Activated CD4-positive, alpha-beta T cell treated with anti-CD3 and anti-CD28 coated beads for 36 hours (primary cell): ENCODE measurements at regions of chr2 and their contacts with region 1.

Region 1: GRCh38 chr2:9021563-9022211 is 18.2 kb upstream of the MBOAT2 start:
- DNase-seq: no peak
- ATAC-seq: peak; percentile 42
- H3K4me3 Mint-ChIP-seq: no peak overlapping the region
- H3K27ac Mint-ChIP-seq: no peak overlapping the region
- H3K4me1 Mint-ChIP-seq: no peaks in the 10 kb centered on the region
- H3K27me3 Mint-ChIP-seq: peaks cover 11% of the 10 kb centered on the region

Region 2: DNA sequence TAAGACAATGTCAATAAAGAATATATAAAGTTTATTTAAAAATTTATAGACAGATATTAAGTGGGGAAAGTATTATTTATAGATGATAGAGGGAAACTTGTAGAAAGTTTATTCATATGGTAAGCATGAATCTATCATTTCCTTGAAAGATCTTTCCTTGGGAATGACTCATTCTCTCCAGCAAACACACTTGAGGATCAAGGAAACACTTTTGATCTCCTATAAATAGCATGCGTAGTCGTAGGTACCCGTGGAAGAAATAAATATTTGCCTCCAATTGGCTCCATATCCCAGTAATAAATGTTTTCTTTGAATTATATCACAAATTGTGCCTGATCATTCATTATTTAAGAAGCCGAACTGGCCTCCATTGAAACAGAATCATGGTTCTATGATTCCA is 1621.1 kb before region 1 on chr2:
- CTCF ChIA-PET with region 1: no interaction called
- POLR2A ChIA-PET with region 1: no interaction called
- intact Hi-C with region 1: loop called in 1 of 2 experiments (anchors 5 kb)
- DNase-seq: no peak
- ATAC-seq: no peak
- H3K4me3 Mint-ChIP-seq: no peak overlapping the region
- H3K27ac Mint-ChIP-seq: no peak overlapping the region
- H3K4me1 Mint-ChIP-seq: peaks cover 11% of the 10 kb centered on the region
- H3K27me3 Mint-ChIP-seq: peaks cover 23% of the 10 kb centered on the region

Region 3: DNA sequence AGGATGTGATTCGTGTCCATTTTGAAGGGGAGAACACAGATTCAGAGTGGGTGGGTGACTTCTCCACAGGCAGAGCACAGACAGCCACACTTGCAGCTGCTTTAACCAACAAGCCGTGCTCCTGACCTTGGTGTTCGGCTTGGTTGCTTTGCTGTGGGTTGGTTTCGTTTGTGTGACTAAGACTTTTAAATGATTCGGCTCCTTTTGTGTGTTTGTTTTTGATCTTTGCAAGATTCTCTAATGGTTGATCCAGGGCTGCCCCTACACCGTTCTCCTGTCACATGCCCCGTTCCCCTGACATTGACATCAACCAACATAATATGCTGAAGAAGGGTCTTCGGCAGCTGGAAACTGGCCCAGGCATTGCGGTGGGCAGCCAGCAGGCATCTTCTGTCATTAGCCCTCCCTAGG is 77.7 kb after region 1 on chr2:
- CTCF ChIA-PET with region 1: no interaction called
- POLR2A ChIA-PET with region 1: no interaction called
- intact Hi-C with region 1: no loop called
- DNase-seq: peak; percentile 67
- ATAC-seq: peak; percentile 93
- H3K4me3 Mint-ChIP-seq: no peak overlapping the region
- H3K27ac Mint-ChIP-seq: no peak overlapping the region
- H3K4me1 Mint-ChIP-seq: peaks cover 12% of the 10 kb centered on the region
- H3K27me3 Mint-ChIP-seq: peaks cover 18% of the 10 kb centered on the region